CD8-positive, alpha-beta memory T cell (primary cell): ENCODE measurements at regions of chrX and their contacts with region 1.

Region 1: GRCh38 chrX:21972721-21973120 is 32.2 kb downstream of the SMS start:
- DNase-seq: peak; percentile 20 to 73 (median 39)
- H3K4me3 ChIP-seq: no peak overlapping the region
- H3K4me3 Mint-ChIP-seq: peak overlapping the region in 5 of 7 donors; percentile 41 to 67 (median 48)
- H3K27ac ChIP-seq: no peak overlapping the region
- H3K27ac Mint-ChIP-seq: peak overlapping the region in 7 of 8 donors; percentile 80 to 96 (median 92)
- H3K4me1 ChIP-seq: peaks cover 16% of the 10 kb centered on the region
- H3K4me1 Mint-ChIP-seq: peaks cover 25 to 29% (median 26%) of the 10 kb centered on the region in 3 donors
- H3K27me3 ChIP-seq: no peaks in the 10 kb centered on the region
- H3K27me3 Mint-ChIP-seq: no peaks in the 10 kb centered on the region

Region 2: DNA sequence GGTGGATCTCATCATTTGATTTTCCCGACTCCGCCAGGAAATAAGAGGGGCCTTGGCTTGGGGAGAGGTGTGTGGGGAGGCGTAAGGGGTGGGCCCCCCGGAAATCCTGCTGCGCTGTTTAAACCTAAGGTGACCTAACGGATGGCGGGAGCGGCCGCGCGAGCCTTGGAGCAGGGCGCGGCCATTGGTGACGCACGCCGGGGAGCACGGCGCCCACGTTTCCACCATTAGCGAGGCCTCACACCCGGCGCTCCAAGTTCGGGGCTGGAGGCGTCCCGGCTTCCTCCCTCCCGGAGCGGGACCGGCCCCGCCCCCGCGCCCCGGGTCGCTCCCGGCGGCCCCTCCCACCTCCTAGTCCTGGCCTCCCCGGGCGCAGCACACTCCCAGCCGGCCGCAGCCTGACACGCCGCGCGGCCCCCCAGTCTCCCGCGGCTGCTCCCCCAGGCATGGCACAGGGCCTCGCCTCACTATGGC is 32.3 kb before region 1 on chrX and contains the start of gene SMS:
- CTCF ChIA-PET with region 1: no interaction called
- POLR2A ChIA-PET with region 1: interaction called, 12 read pairs
- DNase-seq: peak; percentile 32 to 55 (median 42)
- H3K4me3 ChIP-seq: peak within 1 kb of the TSS; percentile 37
- H3K4me3 Mint-ChIP-seq: peak within 1 kb of the TSS; percentile 86 to 94 (median 91)
- H3K27ac ChIP-seq: peak within 1 kb of the TSS; percentile 43
- H3K27ac Mint-ChIP-seq: peak within 1 kb of the TSS; percentile 83 to 92 (median 88)
- H3K4me1 ChIP-seq: peaks cover 25% of the 10 kb centered on the region
- H3K4me1 Mint-ChIP-seq: peaks cover 22 to 37% (median 27%) of the 10 kb centered on the region in 3 donors
- H3K27me3 ChIP-seq: no peaks in the 10 kb centered on the region
- H3K27me3 Mint-ChIP-seq: peaks cover 0 to 4% of the 10 kb centered on the region in 2 donors
- total RNA-seq, gene SMS: 131 to 134 TPM

Region 3: DNA sequence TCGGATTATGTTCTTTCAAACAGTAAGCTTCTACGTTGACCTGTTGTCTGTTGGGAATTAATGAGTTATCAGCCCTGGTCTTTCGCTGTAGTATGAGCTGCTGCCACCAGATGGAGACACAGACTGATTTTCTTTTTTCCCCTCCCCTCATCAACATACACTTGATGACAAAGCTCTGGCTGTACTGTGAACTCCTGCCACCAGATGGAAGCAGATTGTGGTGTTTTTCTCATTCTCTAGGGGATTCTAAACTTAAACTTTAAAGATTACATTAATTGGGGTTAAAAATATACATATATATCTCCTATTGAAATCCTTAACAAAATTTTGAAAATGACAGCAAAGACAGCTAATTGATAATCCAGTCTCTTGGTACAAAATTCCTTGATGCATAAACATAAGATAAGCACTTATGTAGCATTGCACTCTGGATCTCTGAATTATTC is 12.6 kb after region 1 on chrX:
- CTCF ChIA-PET with region 1: interaction called, 21 read pairs
- POLR2A ChIA-PET with region 1: interaction called, 4 read pairs
- DNase-seq: peak; percentile 19 to 64 (median 61)
- H3K4me3 ChIP-seq: no peak overlapping the region
- H3K4me3 Mint-ChIP-seq: no peak overlapping the region
- H3K27ac ChIP-seq: no peak overlapping the region
- H3K27ac Mint-ChIP-seq: peak overlapping the region in 2 of 8 donors; percentile 0 to 5
- H3K4me1 ChIP-seq: no peaks in the 10 kb centered on the region
- H3K4me1 Mint-ChIP-seq: peaks cover 6 to 17% (median 8%) of the 10 kb centered on the region in 3 donors
- H3K27me3 ChIP-seq: no peaks in the 10 kb centered on the region
- H3K27me3 Mint-ChIP-seq: peaks cover 0 to 1% of the 10 kb centered on the region in 2 donors

Region 4: DNA sequence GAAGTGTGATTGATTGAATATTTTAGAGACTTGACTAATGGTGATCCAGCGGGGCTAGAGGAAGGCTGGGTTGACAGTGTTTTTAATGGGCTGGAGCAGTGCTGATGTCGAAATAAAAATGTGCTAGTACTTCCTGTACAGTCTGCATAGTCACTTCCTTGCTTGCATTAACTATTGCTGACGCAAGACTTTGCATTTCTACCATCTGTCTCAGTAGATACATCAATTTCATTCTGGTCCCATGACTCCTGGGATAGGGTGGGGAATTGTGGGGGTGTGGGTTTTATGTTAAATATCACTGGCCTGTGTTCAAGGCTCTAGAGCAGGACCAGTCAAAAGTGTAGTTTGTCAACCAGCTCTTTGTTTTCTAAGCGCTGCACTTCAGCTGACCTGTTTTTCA is 24.2 kb after region 1 on chrX:
- CTCF ChIA-PET with region 1: no interaction called
- POLR2A ChIA-PET with region 1: no interaction called
- DNase-seq: no peak
- H3K4me3 ChIP-seq: no peak overlapping the region
- H3K4me3 Mint-ChIP-seq: no peak overlapping the region
- H3K27ac ChIP-seq: no peak overlapping the region
- H3K27ac Mint-ChIP-seq: peak overlapping the region in 1 of 8 donors; percentile 22
- H3K4me1 ChIP-seq: no peaks in the 10 kb centered on the region
- H3K4me1 Mint-ChIP-seq: peaks cover 5 to 18% (median 5%) of the 10 kb centered on the region in 3 donors
- H3K27me3 ChIP-seq: no peaks in the 10 kb centered on the region
- H3K27me3 Mint-ChIP-seq: no peaks in the 10 kb centered on the region